AG04449 (cell line): ENCODE measurements at regions of chr11 and their contacts with region 1.

Region 1: DNA sequence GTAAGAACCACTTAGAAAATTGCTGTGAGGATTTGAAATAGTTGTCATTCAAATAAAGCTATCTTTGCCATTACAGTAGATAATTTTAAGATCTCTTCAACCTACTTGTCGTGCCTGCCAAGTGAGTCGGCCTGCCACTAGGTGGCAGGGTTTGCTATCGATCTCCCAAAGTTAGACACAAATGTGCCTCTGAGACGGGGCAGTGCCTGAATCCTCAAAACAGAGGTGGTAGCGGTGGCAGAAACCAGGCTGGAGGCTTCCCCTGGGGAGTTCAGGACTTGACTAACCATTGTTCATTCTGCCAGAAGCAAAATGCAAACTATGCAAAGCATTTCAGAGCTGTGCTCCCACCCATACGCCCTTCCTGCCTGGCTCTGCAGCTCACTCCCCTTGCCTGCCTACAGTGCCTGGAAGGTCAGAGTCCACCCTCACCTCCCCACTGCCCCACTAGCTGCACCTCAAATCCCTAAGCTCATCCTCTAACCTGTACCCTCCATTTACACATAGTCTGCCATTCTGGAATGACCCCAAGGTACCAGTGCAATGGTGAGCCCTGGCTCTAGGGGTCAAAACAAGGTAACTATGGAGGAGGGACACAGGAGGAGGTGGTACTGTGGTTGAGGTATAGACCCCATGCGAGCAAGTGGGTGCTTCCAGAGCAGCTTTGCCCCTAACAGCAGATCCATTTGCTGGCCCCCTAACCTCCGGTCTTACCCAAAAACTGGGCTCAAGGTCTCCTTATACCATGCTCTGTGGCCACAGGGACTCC is 82.1 kb downstream of the C11orf58 start:
- DNase-seq: peak; percentile 12
- H3K4me3 ChIP-seq: no peak overlapping the region
- CTCF ChIP-seq: peak; percentile 80

Region 2: DNA sequence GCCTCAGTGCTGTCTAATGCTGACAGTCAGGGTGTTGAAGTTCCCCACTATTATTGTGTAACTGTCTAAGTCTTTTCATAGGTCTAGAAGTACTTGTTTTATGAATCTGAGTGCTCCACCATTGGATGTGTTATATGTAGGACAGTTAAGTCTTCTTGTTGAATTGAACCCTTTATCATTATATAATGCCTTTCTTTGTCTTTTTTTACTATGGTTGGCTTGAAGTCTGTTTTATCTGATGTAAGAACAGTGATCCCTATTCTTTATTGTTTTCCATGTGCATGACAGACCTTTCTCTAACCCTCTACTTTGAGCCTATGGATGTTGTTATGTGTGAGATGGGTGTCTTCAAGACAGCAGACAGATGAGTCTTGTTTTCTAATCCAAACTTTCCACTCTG is 189.9 kb before region 1 on chr11:
- CTCF ChIA-PET with region 1: no interaction called
- POLR2A ChIA-PET with region 1: no interaction called
- DNase-seq: no peak
- H3K4me3 ChIP-seq: no peak overlapping the region
- CTCF ChIP-seq: no peak

Region 3: DNA sequence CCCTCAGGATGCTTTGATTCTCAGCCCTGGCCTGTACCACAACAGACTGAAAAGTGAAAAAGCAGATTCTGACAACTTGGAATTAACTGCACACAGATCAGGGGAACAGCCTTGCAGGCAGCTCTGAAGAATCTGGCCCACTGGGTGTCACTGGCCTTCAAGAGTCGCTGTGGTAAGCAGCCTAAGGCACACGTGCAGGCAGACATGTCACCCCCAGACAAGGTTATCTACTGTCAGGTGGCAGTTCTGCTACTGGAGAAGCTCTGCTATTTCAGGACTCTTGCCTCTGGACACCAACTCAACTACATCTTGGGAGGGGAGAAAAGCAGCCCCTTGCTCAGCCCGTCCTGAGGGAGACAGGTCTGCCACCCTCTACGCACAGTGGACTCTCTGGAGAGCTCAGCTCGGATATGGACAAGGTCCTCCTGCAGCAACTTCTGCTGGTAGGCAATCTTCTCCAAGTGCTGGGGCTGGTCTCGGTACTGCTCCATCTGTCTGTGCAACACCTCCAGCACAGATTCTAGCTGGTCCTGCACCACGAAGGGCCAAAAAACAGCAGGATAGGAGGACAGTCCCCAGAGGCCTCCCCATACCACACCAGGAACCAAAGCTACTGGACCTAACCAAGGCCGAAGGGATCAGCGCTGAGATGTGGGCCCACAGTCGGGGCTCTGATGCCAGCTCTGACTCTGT is 19.1 kb before region 1 on chr11:
- CTCF ChIA-PET with region 1: interaction called, 61 read pairs
- POLR2A ChIA-PET with region 1: no interaction called
- DNase-seq: no peak
- H3K4me3 ChIP-seq: no peak overlapping the region
- CTCF ChIP-seq: no peak

Region 4: GRCh38 chr11:16809886-16810668 is 10.4 kb before region 1 on chr11:
- CTCF ChIA-PET with region 1: interaction called, 61 read pairs
- POLR2A ChIA-PET with region 1: no interaction called
- DNase-seq: no peak
- H3K4me3 ChIP-seq: no peak overlapping the region
- CTCF ChIP-seq: no peak

Region 5: DNA sequence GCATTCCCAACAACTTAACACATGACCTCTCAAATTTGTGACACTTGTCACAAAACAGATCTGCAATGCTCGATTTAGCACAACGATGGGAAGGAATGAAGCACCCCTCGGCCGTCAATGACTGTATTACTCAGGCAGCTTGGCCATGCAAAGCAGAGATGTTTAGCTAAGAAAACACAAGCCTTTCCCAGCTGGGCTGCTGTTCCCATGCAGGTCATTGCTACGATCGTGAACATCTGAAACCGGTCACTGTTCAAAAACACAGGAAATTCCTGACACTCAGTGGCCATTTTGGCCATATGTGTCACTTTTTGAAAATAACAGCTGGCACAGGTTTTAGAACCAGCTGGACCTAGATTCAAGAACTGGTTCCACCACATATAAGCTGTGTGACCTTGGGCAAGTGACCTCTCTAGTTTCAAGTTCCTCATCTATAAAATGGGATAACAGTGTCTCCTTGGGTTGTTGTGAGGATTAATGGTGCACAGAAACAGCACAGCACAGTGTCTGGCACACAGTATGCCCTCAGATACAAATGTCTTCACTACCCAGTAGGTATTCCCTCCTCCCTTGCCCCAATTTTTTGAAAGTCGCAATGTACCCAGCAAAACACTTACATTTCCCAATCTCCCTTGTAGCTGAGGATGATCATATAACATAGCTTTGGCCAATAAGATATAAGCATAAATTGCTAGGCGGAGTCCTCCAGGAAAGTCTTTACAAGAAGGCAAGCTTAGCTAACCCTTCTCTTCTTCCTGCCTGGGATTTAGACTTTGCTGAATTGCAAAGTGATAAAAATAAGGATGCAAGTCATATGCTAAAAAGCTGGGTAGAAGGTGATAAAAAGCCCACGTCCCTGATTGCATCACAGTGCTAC is 11.0 kb after region 1 on chr11:
- CTCF ChIA-PET with region 1: interaction called, 18 read pairs
- POLR2A ChIA-PET with region 1: no interaction called
- DNase-seq: no peak
- H3K4me3 ChIP-seq: no peak overlapping the region
- CTCF ChIP-seq: no peak

Region 6: DNA sequence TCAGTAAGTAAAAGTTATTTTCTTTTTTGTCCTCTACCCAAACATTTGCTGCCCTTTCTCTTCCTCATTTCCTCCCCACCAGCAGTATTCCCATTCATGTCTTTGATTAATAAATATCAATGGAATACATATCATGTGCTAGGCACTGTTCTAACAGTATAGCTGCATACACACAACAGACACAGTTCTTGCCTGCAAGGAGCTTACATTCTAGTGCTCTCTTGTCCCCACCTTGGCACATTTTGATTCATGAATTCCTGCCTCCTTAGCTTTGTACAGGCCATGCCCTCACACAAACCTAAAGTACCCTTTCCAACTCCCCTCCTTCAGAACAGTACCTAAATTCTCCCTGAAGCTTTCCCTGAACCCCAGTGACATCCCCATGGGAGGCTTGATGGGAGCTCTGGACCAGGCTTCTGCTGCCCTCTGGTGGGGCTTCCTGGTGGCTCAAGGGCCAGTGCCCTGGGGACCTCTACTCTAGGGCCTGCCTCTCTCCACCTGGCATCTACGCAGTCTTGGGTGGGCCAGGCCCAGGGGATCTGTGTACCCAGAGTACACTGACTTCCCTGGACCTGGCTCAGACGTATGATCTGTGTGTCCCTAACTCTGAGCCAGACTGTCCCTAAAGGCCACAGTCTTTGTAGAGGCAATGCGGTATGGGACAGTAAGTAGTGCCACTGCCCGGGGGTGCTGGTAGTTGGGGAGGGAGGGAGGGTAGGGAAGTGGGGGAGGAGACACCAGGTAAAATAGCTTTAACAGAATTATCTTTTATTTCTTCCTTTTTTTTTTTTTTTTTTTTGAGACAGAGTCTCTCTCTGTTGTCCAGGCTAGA is 242.9 kb after region 1 on chr11:
- CTCF ChIA-PET with region 1: interaction called, 46 read pairs
- POLR2A ChIA-PET with region 1: no interaction called
- DNase-seq: no peak
- H3K4me3 ChIP-seq: no peak overlapping the region
- CTCF ChIP-seq: peak; percentile 81